ENCODE measurements at regions of chr7 and their contacts with region 1.

Region 1: DNA sequence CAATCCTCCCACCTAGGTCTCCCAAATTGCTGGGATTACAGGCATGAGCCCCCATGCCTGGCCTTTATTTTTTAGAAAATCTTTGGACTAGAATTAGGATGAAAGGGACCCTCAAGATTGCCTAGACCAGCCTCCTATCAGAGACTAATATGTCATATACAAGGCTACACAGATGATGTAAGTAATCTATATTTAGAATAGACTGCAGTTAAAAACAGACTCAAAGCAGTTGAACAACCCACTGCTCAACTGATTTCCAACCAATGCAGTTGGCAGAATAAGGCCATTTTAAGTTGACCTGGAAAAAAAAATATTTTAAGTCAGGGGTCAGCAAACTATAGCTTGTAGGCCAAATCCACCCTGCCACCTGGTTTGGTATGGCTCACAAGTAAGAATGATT is 27.7 kb downstream of the PSPH start:
- DNase-seq: no peak
- H3K4me3 ChIP-seq: no peak overlapping the region
- H3K4me1 ChIP-seq: no peaks in the 10 kb centered on the region
- H3K27me3 ChIP-seq: no peaks in the 10 kb centered on the region

Region 2: DNA sequence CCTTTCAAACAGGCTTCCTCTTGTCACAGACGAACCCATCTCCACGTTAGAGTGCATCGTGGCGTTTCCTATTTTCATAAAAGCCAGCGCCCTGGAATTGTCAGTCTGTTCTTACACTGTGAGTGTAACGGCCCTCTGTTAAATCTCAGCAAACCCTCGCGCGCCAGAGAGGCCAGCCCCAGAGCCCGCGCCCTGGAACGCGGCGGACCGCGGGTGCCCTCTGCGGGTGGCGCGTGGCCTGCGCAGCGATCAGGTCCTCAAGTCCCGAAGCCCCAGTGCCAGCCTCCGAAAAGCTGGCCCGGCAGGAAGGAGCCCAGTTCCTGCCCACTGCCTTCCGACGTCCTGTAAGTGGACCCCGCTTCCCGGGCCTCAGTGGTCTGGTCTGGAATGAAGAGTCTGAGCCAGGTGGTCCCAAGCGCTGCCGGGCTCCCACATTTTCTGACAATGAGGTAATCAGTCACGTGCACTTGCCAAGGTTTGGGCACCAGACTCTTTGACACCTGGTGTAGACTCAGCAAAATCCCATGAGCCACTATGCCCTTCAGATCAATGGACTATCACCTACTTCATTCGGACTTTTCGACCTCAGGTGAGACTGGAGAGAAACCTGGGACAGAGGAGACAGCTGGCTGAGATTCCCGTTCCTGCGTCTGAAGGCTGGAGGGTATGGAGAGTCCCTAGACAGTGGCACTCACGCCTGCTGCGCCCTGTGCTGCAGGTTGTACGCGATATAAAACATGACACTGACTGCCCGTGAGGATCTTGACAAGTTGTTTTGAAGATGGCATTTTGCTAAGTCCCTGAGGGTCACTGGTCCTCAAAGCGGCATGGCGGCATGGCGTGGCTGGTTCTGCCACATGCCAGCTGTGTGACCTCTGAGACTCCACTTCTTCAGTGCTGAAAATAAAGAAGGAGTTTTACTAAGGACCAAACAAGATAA is 767.7 kb before region 1 on chr7:
- in situ Hi-C with region 1: no loop called
- DNase-seq: peak; percentile 56 to 84
- H3K4me3 ChIP-seq: peak overlapping the region; percentile 21
- H3K4me1 ChIP-seq: peaks cover 6% of the 10 kb centered on the region; the same call in 1 of the 2 replicates
- H3K27me3 ChIP-seq: peaks cover 4% of the 10 kb centered on the region

Region 3: DNA sequence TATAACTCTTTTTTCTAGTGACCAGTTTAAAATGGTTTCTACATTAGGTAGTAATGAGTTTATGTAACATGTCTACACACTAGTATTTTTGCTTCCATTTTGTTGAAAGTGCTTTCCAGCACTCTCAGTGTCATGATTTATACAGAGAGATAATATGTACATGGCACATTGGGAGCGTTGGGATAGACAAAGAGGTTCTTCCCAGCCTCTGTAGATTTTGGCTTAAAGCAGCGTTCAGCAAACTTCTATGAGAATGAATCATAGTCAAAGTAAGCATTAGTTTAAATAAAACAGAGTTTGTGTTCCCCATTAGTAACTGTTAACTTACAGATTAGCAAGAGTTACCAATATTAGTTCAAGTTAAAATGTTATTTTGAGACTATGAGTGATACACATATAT is 204.8 kb before region 1 on chr7:
- in situ Hi-C with region 1: no loop called
- DNase-seq: no peak
- H3K4me3 ChIP-seq: no peak overlapping the region
- H3K4me1 ChIP-seq: no peaks in the 10 kb centered on the region
- H3K27me3 ChIP-seq: no peaks in the 10 kb centered on the region

Region 4: DNA sequence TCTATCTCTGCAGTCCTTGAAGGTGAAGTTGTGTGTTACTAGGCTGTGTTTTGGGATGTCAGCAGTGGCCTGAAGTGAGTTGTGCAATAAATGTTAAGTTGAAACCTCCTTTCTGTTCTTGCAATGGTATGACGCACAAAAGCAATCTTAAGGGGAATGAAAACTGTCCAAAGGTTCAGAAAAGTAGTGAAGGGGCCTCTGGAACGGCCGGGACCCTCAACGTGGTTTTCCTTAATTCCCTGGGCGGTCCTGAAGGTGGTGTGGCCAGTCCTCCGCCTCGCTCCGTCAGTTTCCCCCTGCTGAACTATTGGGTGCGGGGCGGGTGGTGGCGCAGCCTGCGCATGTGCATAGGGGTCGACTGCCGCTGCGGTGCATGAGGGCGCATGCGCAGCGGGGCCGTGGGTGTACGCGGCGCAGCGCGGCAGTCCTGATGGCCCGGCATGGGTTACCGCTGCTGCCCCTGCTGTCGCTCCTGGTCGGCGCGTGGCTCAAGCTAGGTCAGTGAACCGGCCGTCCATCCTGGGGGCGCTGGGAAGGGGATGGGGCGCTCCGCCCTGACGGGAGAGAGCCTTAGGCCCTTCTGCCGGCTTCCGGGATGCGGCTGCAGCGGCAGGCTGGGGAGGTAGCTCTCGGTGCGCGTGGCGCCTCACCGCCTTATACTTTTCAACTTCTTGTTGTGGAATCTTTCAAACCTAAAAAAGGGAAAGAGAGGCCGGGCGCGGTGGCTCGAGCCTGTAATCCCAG is 40.6 kb after region 1 on chr7 and contains the start of gene SUMF2:
- in situ Hi-C with region 1: loop called (anchors 5 kb)
- DNase-seq: peak; percentile 80 to 93
- H3K4me3 ChIP-seq: peak within 1 kb of the TSS; percentile 77
- H3K4me1 ChIP-seq: peaks cover 8% of the 10 kb centered on the region
- H3K27me3 ChIP-seq: no peaks in the 10 kb centered on the region